Activated naive CD4-positive, alpha-beta T cell treated with anti-CD3 and anti-CD28 coated beads for 36 hours (primary cell): ENCODE measurements at regions of chr11 and their contacts with region 1.

Region 1: DNA sequence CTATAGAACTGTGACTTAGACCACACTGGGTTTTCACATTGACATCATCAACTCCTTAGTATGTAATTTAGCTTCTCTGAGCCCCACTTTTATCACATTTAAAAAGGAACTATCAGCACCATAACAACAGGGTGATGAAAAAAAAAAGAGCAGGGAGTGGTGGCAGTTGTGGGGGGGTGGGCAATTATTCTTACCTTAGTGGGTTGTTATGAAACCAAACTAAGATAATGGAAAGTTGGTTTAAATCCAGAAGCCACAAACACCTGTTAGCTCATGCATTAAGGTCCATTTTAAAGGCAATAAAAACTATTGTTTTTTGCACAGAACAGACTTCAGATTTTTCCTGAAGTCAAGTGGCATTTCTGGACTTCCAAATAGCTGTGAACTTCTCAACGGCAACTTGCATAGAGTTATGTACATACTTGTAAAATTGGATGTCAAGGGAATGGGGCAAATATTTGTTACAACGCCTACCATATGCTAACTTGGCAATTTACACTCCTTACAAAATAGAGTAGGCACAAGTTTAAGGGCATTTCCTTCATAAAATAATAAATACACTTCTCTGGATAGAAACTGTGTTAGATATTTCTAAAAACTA is 793.6 kb downstream of the DLG2 start:
- DNase-seq: no peak
- H3K4me3 Mint-ChIP-seq: no peak overlapping the region
- H3K27ac Mint-ChIP-seq: no peak overlapping the region
- H3K4me1 Mint-ChIP-seq: no peaks in the 10 kb centered on the region
- H3K27me3 Mint-ChIP-seq: no peaks in the 10 kb centered on the region

Region 2: GRCh38 chr11:84817998-84818397 is 15.6 kb before region 1 on chr11:
- CTCF ChIA-PET with region 1: no interaction called
- intact Hi-C with region 1: loop called (anchors 1 kb)
- DNase-seq: no peak
- H3K4me3 Mint-ChIP-seq: no peak overlapping the region
- H3K27ac Mint-ChIP-seq: no peak overlapping the region
- H3K4me1 Mint-ChIP-seq: no peaks in the 10 kb centered on the region
- H3K27me3 Mint-ChIP-seq: no peaks in the 10 kb centered on the region

Region 3: GRCh38 chr11:85044911-85045310 is 211.3 kb after region 1 on chr11:
- CTCF ChIA-PET with region 1: no interaction called
- intact Hi-C with region 1: no loop called
- DNase-seq: no peak
- H3K4me3 Mint-ChIP-seq: no peak overlapping the region
- H3K27ac Mint-ChIP-seq: no peak overlapping the region
- H3K4me1 Mint-ChIP-seq: no peaks in the 10 kb centered on the region
- H3K27me3 Mint-ChIP-seq: no peaks in the 10 kb centered on the region